ENCODE measurements at regions of chr20 and their contacts with region 1.

Region 1: GRCh38 chr20:33927724-33928123 is 66.0 kb upstream of the RALY start:
- DNase-seq: no peak
- H3K4me3 ChIP-seq: no peak overlapping the region
- H3K4me3 Mint-ChIP-seq: no peak overlapping the region
- H3K27ac Mint-ChIP-seq: no peak overlapping the region
- H3K4me1 ChIP-seq: no peaks in the 10 kb centered on the region
- H3K4me1 Mint-ChIP-seq: no peaks in the 10 kb centered on the region
- H3K27me3 ChIP-seq: no peaks in the 10 kb centered on the region
- H3K27me3 Mint-ChIP-seq: no peaks in the 10 kb centered on the region
- CTCF ChIP-seq: no peak

Region 2: DNA sequence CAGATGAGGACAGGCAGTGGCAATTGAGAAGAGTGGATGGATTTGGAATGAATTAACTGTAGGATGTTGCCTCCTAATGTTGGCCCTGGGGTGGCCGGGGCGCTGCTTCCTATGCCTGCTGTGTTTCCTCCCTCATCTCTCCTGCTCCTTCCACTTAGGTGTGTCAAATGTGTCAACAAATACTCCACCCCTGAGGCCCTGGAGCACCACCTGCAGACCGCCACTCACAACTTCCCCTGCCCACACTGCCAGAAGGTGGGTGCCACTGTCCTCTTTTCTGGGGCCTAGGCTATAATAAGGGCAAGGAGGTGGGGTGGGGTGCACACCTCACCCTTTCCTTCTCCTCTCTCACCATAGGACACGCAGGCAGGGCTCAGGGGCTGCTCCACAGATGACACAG is 146.6 kb before region 1 on chr20:
- CTCF ChIA-PET with region 1: no interaction called
- POLR2A ChIA-PET with region 1: interaction called, 11 read pairs
- intact Hi-C with region 1: no loop called
- DNase-seq: no peak
- H3K4me3 ChIP-seq: no peak overlapping the region
- H3K4me3 Mint-ChIP-seq: no peak overlapping the region
- H3K27ac Mint-ChIP-seq: no peak overlapping the region
- H3K4me1 ChIP-seq: peaks cover 13% of the 10 kb centered on the region
- H3K4me1 Mint-ChIP-seq: peaks cover 25% of the 10 kb centered on the region
- H3K27me3 ChIP-seq: no peaks in the 10 kb centered on the region
- H3K27me3 Mint-ChIP-seq: no peaks in the 10 kb centered on the region
- CTCF ChIP-seq: peak in 1 of 2 experiments; percentile 18

Region 3: GRCh38 chr20:33875055-33875454 is 52.7 kb before region 1 on chr20:
- CTCF ChIA-PET with region 1: no interaction called
- POLR2A ChIA-PET with region 1: no interaction called
- intact Hi-C with region 1: no loop called
- DNase-seq: no peak
- H3K4me3 ChIP-seq: no peak overlapping the region
- H3K4me3 Mint-ChIP-seq: no peak overlapping the region
- H3K27ac Mint-ChIP-seq: no peak overlapping the region
- H3K4me1 ChIP-seq: no peaks in the 10 kb centered on the region
- H3K4me1 Mint-ChIP-seq: no peaks in the 10 kb centered on the region
- H3K27me3 ChIP-seq: no peaks in the 10 kb centered on the region
- H3K27me3 Mint-ChIP-seq: no peaks in the 10 kb centered on the region
- CTCF ChIP-seq: no peak

Region 4: DNA sequence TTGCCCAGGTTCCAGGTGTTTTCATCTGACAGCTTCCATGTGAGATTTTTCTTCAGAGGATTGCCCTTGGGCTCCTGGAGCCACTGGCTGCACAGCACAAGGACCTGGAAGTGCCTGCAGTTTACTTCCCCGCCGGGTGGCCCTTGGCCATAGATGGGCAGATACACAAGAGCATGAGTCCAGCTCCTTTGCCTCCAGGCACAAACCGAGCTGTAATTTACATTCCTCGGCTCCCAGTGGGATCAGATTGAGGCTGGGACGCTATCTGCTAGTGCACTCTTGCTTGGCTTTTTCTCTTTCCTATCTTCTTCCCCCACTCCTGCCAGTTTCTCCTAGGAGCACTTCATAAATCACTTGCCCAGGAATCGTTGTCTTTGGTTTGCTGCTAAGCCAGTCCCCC is 19.4 kb before region 1 on chr20:
- CTCF ChIA-PET with region 1: no interaction called
- POLR2A ChIA-PET with region 1: no interaction called
- intact Hi-C with region 1: no loop called
- DNase-seq: peak; percentile 65 to 92
- H3K4me3 ChIP-seq: no peak overlapping the region
- H3K4me3 Mint-ChIP-seq: no peak overlapping the region
- H3K27ac Mint-ChIP-seq: peak overlapping the region; percentile 54
- H3K4me1 ChIP-seq: peaks cover 39% of the 10 kb centered on the region
- H3K4me1 Mint-ChIP-seq: peaks cover 37% of the 10 kb centered on the region
- H3K27me3 ChIP-seq: no peaks in the 10 kb centered on the region
- H3K27me3 Mint-ChIP-seq: no peaks in the 10 kb centered on the region
- CTCF ChIP-seq: no peak

Measured in Caco-2 (cell line).